Mucosa of descending colon (tissue), 3 donors: ENCODE measurements at regions of chr10 and their contacts with region 1.

Region 1: DNA sequence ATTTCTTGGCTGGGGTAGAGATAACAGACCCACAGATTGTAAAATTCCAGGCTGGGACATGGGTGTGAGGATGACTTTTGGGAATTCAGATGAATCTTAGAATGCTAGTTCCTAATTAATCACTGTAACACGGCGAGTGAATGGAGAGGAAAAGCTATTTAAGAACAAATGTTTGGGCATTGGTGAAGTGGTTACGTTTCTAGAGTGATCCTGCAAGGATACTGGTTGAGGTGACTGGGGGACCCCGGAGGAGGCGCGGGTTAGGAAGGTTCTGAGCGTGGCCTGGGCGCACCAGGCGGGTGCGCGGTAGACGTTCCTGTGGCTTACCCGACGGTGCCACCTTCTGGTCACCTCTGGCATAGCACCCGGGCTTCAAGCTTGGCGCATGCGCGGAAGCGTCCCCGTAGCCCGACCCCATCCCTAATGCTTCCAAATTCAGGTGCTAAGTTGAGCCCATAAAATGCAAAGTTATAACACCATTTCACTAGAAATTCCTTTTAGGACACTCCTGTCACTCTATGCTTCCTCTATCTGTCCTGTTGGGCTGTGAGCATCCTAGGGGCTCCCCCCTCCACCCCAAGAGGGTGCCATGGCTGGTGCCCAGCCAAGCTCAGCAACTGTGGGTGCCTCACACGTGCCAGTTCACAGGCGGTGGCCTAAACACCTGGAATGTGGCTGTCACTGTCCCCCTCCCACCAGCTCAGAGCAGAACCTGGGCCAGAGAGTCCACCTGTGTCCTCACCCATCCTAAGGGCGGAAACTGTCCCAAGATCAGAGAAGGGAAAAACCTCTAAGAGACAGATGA is 104.5 kb downstream of the PTPRE start:
- DNase-seq: peak; percentile 86 to 93 (median 88)
- ATAC-seq: peak; percentile 98
- H3K4me3 ChIP-seq: no peak overlapping the region
- H3K4me1 ChIP-seq: no peaks in the 10 kb centered on the region
- CTCF ChIP-seq: peak; percentile 98

Region 2: DNA sequence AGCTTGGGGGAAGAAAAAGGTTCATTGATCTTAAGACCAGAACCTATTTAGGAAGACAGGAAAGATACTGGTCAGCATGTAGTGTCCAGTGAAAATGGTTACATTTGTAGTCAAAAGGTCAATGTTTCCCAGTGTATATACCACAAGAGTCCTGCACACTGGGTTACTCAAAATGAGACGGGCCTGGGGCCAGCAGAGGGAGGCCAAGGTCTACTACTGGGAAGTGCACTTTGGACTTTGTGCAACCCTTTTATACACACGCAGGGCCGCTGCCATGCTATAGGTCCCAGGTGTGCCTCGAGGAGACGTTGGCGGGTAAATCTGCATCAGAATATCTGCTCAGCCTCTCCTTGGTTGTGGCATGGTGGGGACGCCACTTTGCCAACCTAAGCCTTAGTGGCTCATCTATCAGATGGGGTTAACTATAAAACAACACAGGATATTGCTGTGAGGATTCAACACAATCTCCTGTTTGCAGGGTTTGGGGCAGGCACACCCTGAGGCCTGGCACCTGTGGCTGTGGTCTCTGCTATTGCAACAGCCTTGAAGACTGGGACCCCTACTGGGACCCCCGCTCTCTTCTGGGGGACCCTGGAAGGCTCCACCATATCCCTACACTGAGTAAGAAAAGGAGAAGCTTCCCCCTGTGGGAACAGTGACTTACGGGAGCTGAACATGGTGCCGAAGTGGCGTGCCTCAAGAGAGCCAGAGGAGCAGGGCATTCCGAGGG is 138.3 kb before region 1 on chr10:
- intact Hi-C with region 1: loop called in 1 of 2 experiments (anchors 5 kb)
- DNase-seq: peak; percentile 76 to 90 (median 85)
- ATAC-seq: peak; percentile 96
- H3K4me3 ChIP-seq: no peak overlapping the region
- H3K4me1 ChIP-seq: peaks cover 10% of the 10 kb centered on the region
- CTCF ChIP-seq: peak; percentile 26

Region 3: GRCh38 chr10:127906548-127907377 is 104.6 kb before region 1 on chr10 and contains the start of gene PTPRE:
- intact Hi-C with region 1: loop called (anchors 5 to 10 kb)
- DNase-seq: peak; percentile 79 to 90 (median 86)
- ATAC-seq: peak; percentile 93
- H3K4me3 ChIP-seq: peak within 1 kb of the TSS; percentile 61
- H3K4me1 ChIP-seq: peaks cover 31% of the 10 kb centered on the region
- CTCF ChIP-seq: peak; percentile 77
- total RNA-seq, gene PTPRE: 28.8 to 33.6 (median 32.5) TPM

Region 4: GRCh38 chr10:127947208-127947607 is 64.2 kb before region 1 on chr10:
- intact Hi-C with region 1: no loop called
- DNase-seq: no peak
- ATAC-seq: no peak
- H3K4me3 ChIP-seq: no peak overlapping the region
- H3K4me1 ChIP-seq: peaks cover 9% of the 10 kb centered on the region
- CTCF ChIP-seq: no peak